Pancreas (tissue), 10 donors: ENCODE measurements at regions of chr3 and their contacts with region 1.

Region 1: GRCh38 chr3:48989796-48990635 is at the start of gene P4HTM:
- DNase-seq: peak; percentile 55 to 86 (median 76)
- ATAC-seq: peak; percentile 84 to 90 (median 85)
- H3K4me3 ChIP-seq: peak within 1 kb of the TSS; percentile 94 to 99 (median 97)
- H3K27ac ChIP-seq: peak within 1 kb of the TSS; percentile 78 to 89 (median 82)
- H3K4me1 ChIP-seq: peaks cover 6 to 16% (median 14%) of the 10 kb centered on the region in 3 donors
- H3K27me3 ChIP-seq: no peaks in the 10 kb centered on the region
- CTCF ChIP-seq: peak in 1 of 4 donors; percentile 7
- total RNA-seq, gene P4HTM: 29.9 to 42.4 (median 38.0) TPM

Region 2: DNA sequence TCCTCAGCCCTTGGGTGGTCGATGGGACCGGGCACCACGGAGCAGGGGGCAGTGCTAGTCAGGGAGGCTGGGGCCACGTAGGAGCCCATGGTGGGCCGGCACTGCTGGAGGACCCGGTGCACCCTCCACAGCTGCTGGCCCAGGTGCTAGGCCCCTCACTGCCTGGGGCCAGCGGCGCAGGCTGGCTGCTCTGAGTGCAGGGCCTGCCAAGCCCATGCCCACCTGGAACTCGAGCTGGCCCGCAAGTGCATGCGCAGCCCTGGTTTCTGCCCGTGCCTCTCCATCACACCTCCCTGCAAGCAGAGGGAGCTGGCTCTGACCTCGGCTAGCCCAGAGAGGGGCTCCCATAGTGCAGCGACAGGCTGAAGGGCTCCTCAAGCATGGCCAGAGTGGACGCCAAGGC is 223.5 kb after region 1 on chr3:
- intact Hi-C with region 1: no loop called
- DNase-seq: peak in 1 of 6 donors; percentile 51
- ATAC-seq: no peak
- H3K4me3 ChIP-seq: no peak overlapping the region
- H3K27ac ChIP-seq: no peak overlapping the region
- H3K4me1 ChIP-seq: peaks cover 0 to 2% (median 0%) of the 10 kb centered on the region in 3 donors
- H3K27me3 ChIP-seq: no peaks in the 10 kb centered on the region
- CTCF ChIP-seq: no peak

Region 3: GRCh38 chr3:49445381-49445780 is 455.4 kb after region 1 on chr3:
- intact Hi-C with region 1: loop called in 1 of 3 experiments (anchors 10 kb)
- DNase-seq: no peak
- ATAC-seq: no peak
- H3K4me3 ChIP-seq: no peak overlapping the region
- H3K27ac ChIP-seq: no peak overlapping the region
- H3K4me1 ChIP-seq: no peaks in the 10 kb centered on the region
- H3K27me3 ChIP-seq: no peaks in the 10 kb centered on the region
- CTCF ChIP-seq: no peak